ENCODE measurements at regions of chr16 and their contacts with region 1.

Region 1: GRCh38 chr16:48623304-48624016 is 13.5 kb upstream of the N4BP1 start:
- DNase-seq: peak; percentile 64 to 92 (median 79)
- ATAC-seq: peak; percentile 99
- H3K4me3 ChIP-seq: peak overlapping the region; percentile 58
- H3K4me3 Mint-ChIP-seq: peak overlapping the region; percentile 88
- H3K27ac ChIP-seq: no peak overlapping the region
- H3K27ac Mint-ChIP-seq: peak overlapping the region; percentile 84
- H3K4me1 ChIP-seq: peaks cover 29% of the 10 kb centered on the region
- H3K4me1 Mint-ChIP-seq: peaks cover 33% of the 10 kb centered on the region
- H3K27me3 ChIP-seq: no peaks in the 10 kb centered on the region
- H3K27me3 Mint-ChIP-seq: no peaks in the 10 kb centered on the region
- CTCF ChIP-seq: peak; percentile 99

Region 2: DNA sequence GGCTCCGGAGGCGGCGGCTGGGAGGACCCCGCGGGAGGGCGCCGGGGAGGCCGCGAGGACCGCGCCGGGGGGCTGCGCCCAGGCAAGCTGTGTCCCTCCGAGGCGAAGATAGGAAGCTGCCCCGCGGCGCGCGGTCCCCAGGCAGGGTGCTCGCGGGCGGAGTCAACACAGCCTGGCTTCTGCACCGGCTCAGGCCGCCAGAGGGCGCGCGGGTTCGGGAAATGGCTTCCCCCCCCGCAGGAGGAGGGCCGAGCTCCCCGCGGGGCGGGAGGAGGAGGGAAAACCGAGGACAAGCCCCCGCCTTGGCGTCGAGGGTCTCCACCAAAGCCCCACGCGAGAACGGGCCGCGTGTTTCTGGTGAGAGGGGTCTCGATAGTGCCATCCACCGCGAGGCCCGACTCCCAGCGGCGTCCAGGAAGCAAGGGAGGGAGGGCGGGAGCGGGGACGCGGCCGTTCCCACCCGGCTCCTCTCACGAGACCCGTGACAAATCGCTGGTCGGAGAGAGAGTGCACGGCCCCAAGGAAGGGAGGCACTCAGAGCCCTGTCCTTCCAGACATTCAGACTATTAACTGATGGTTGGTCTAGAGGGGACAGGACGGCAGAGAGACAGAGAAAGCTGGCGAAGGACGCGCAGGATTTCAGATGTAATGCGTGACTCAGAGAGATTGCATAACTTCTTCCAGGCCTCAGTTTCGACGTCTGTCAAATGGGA is 1585.6 kb before region 1 on chr16:
- CTCF ChIA-PET with region 1: no interaction called
- POLR2A ChIA-PET with region 1: no interaction called
- intact Hi-C with region 1: loop called in 1 of 2 experiments (anchors 10 kb)
- DNase-seq: peak; percentile 76 to 94 (median 88)
- ATAC-seq: peak; percentile 97
- H3K4me3 ChIP-seq: peak overlapping the region; percentile 74
- H3K4me3 Mint-ChIP-seq: peak overlapping the region; percentile 67
- H3K27ac ChIP-seq: no peak overlapping the region
- H3K27ac Mint-ChIP-seq: no peak overlapping the region
- H3K4me1 ChIP-seq: peaks cover 13% of the 10 kb centered on the region
- H3K4me1 Mint-ChIP-seq: no peaks in the 10 kb centered on the region
- H3K27me3 ChIP-seq: no peaks in the 10 kb centered on the region
- H3K27me3 Mint-ChIP-seq: no peaks in the 10 kb centered on the region
- CTCF ChIP-seq: peak; percentile 93

Region 3: GRCh38 chr16:48365581-48366164 is 257.8 kb before region 1 on chr16:
- CTCF ChIA-PET with region 1: interaction called, 28 read pairs
- POLR2A ChIA-PET with region 1: interaction called, 19 read pairs
- intact Hi-C with region 1: no loop called
- DNase-seq: peak; percentile 49 to 86 (median 68)
- ATAC-seq: peak; percentile 82
- H3K4me3 ChIP-seq: peak overlapping the region; percentile 67
- H3K4me3 Mint-ChIP-seq: peak overlapping the region; percentile 100
- H3K27ac ChIP-seq: peak overlapping the region; percentile 81
- H3K27ac Mint-ChIP-seq: peak overlapping the region; percentile 98
- H3K4me1 ChIP-seq: peaks cover 17% of the 10 kb centered on the region
- H3K4me1 Mint-ChIP-seq: peaks cover 55% of the 10 kb centered on the region
- H3K27me3 ChIP-seq: no peaks in the 10 kb centered on the region
- H3K27me3 Mint-ChIP-seq: no peaks in the 10 kb centered on the region
- CTCF ChIP-seq: no peak

Region 4: DNA sequence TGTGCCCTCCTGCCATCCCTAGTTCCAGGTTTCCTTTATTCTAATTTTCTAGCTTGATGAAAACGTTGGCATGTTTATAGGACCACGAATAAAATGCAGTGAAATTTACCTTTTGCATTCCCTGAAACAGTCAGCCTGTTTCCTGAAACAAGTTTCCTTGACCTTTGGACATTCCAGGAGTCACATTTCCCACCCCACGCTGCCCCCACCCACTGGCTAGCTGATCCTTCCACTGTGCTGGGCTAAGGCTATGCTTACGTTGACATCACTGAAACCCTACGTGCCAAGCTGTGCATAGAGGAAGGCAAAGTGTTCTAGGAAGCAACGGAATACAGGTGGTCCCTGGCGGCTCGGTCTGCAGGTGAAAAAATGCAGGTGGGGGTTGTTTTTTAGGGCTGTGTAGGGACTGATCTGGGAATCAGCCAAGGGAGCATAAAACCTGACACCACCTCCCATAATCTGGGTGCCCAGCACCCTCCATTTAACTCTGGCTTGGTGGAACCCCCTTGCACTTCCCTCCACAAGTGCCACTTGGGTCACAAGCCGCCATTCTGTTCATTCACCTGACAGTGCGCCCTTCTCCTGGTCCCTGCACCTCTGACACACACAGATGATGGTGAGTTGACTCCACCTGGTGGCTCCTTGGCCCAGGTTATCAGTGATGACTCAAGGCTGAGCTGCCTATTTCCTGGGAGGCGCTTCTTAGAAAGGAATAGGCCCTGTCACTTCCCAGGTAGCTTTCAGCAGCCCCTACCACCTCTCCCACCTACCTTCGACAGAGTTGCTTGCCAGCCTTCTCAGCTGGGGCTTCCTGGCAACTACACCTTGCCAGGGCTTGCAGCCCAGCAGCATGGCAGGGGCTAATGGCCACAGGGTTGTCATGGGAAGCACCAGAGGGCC is 97.2 kb before region 1 on chr16:
- CTCF ChIA-PET with region 1: interaction called, 32 read pairs
- POLR2A ChIA-PET with region 1: no interaction called
- intact Hi-C with region 1: no loop called
- DNase-seq: peak in 4 of 14 experiments; percentile 27 to 42 (median 30)
- ATAC-seq: no peak
- H3K4me3 ChIP-seq: no peak overlapping the region
- H3K4me3 Mint-ChIP-seq: no peak overlapping the region
- H3K27ac ChIP-seq: no peak overlapping the region
- H3K27ac Mint-ChIP-seq: no peak overlapping the region
- H3K4me1 ChIP-seq: no peaks in the 10 kb centered on the region
- H3K4me1 Mint-ChIP-seq: no peaks in the 10 kb centered on the region
- H3K27me3 ChIP-seq: no peaks in the 10 kb centered on the region
- H3K27me3 Mint-ChIP-seq: no peaks in the 10 kb centered on the region
- CTCF ChIP-seq: no peak

Region 5: GRCh38 chr16:48556913-48557351 is 66.5 kb before region 1 on chr16:
- CTCF ChIA-PET with region 1: interaction called, 73 read pairs
- POLR2A ChIA-PET with region 1: interaction called, 9 read pairs
- intact Hi-C with region 1: loop called in 1 of 2 experiments (anchors 5 kb)
- DNase-seq: peak in 3 of 14 experiments; percentile 30 to 55 (median 50)
- ATAC-seq: peak; percentile 16
- H3K4me3 ChIP-seq: no peak overlapping the region
- H3K4me3 Mint-ChIP-seq: peak overlapping the region; percentile 31
- H3K27ac ChIP-seq: no peak overlapping the region
- H3K27ac Mint-ChIP-seq: peak overlapping the region; percentile 8
- H3K4me1 ChIP-seq: peaks cover 24% of the 10 kb centered on the region
- H3K4me1 Mint-ChIP-seq: peaks cover 82% of the 10 kb centered on the region
- H3K27me3 ChIP-seq: no peaks in the 10 kb centered on the region
- H3K27me3 Mint-ChIP-seq: no peaks in the 10 kb centered on the region
- CTCF ChIP-seq: no peak

Region 6: GRCh38 chr16:48590476-48590875 is 33.0 kb before region 1 on chr16:
- CTCF ChIA-PET with region 1: interaction called, 15 read pairs
- POLR2A ChIA-PET with region 1: interaction called, 3 read pairs
- intact Hi-C with region 1: no loop called
- DNase-seq: no peak
- ATAC-seq: no peak
- H3K4me3 ChIP-seq: no peak overlapping the region
- H3K4me3 Mint-ChIP-seq: no peak overlapping the region
- H3K27ac ChIP-seq: no peak overlapping the region
- H3K27ac Mint-ChIP-seq: peak overlapping the region; percentile 1
- H3K4me1 ChIP-seq: peaks cover 14% of the 10 kb centered on the region
- H3K4me1 Mint-ChIP-seq: peaks cover 68% of the 10 kb centered on the region
- H3K27me3 ChIP-seq: no peaks in the 10 kb centered on the region
- H3K27me3 Mint-ChIP-seq: no peaks in the 10 kb centered on the region
- CTCF ChIP-seq: no peak

Region 7: DNA sequence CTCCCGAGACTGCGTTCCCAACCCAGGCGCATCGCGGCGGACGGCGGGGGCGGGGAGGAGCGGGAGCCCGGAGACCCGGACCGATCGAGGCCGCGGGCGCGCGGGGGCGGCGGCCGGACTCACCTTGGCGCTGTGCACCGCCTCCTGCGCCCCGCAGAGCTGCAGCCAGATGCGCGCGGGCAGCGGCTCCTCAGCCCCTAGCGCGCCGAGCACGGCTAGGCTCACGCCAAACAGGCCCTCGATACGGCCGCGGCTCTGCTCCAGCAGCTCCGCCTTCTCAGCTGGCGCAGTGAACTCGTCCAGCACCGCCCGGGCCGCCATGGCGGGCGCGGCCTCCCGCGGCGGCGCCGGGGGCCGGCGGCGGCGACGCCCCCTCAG is 13.8 kb before region 1 on chr16:
- CTCF ChIA-PET with region 1: interaction called, 101 read pairs
- POLR2A ChIA-PET with region 1: interaction called, 93 read pairs
- intact Hi-C with region 1: loop called (anchors 1 to 2 kb)
- DNase-seq: no peak
- ATAC-seq: peak; percentile 13
- H3K4me3 ChIP-seq: peak overlapping the region; percentile 92
- H3K4me3 Mint-ChIP-seq: no peak overlapping the region
- H3K27ac ChIP-seq: peak overlapping the region; percentile 67 to 87
- H3K27ac Mint-ChIP-seq: peak overlapping the region; percentile 95
- H3K4me1 ChIP-seq: peaks cover 84% of the 10 kb centered on the region
- H3K4me1 Mint-ChIP-seq: peaks cover 52% of the 10 kb centered on the region
- H3K27me3 ChIP-seq: no peaks in the 10 kb centered on the region
- H3K27me3 Mint-ChIP-seq: no peaks in the 10 kb centered on the region
- CTCF ChIP-seq: no peak

Measured in CD4-positive, alpha-beta T cell (primary cell).